Gastrocnemius medialis (tissue), 4 donors: ENCODE measurements at regions of chr17 and their contacts with region 1.

Region 1: GRCh38 chr17:17476865-17477467 is at the start of gene MED9:
- DNase-seq: peak; percentile 83 to 91
- ATAC-seq: peak; percentile 96 to 99
- H3K4me3 ChIP-seq: peak within 1 kb of the TSS; percentile 68 to 98 (median 97)
- H3K27ac ChIP-seq: peak within 1 kb of the TSS; percentile 89 to 99 (median 98)
- H3K4me1 ChIP-seq: peaks cover 40 to 46% of the 10 kb centered on the region in 2 donors
- H3K27me3 ChIP-seq: no peaks in the 10 kb centered on the region
- CTCF ChIP-seq: peak in 2 of 5 experiments; percentile 17 to 20
- POLR2A ChIP-seq: peak; percentile 55 to 78
- total RNA-seq, gene MED9: 20.4 to 33.7 (median 27.7) TPM

Region 2: GRCh38 chr17:17280613-17281549 is 196.1 kb before region 1 on chr17 and contains the start of gene COPS3:
- in situ Hi-C with region 1: no loop called
- intact Hi-C with region 1: loop called (anchors 5 kb)
- DNase-seq: peak; percentile 98 to 99
- ATAC-seq: peak; percentile 95
- H3K4me3 ChIP-seq: peak within 1 kb of the TSS; percentile 88 to 99 (median 92)
- H3K27ac ChIP-seq: peak within 1 kb of the TSS; percentile 97 to 100 (median 100)
- H3K4me1 ChIP-seq: peaks cover 39 to 41% of the 10 kb centered on the region in 2 donors
- H3K27me3 ChIP-seq: no peaks in the 10 kb centered on the region
- CTCF ChIP-seq: no peak
- POLR2A ChIP-seq: peak; percentile 90 to 91
- total RNA-seq, gene COPS3: 145 to 249 (median 175) TPM

Region 3: GRCh38 chr17:17356149-17356930 is 120.6 kb before region 1 on chr17:
- in situ Hi-C with region 1: loop called in 1 of 4 experiments (anchors 10 kb)
- intact Hi-C with region 1: loop called (anchors 5 kb)
- DNase-seq: peak; percentile 55 to 77
- ATAC-seq: peak; percentile 79 to 83
- H3K4me3 ChIP-seq: no peak overlapping the region
- H3K27ac ChIP-seq: no peak overlapping the region
- H3K4me1 ChIP-seq: peaks cover 0 to 5% of the 10 kb centered on the region in 2 donors
- H3K27me3 ChIP-seq: no peaks in the 10 kb centered on the region
- CTCF ChIP-seq: peak; percentile 98 to 100 (median 99)
- POLR2A ChIP-seq: no peak

Region 4: GRCh38 chr17:17580662-17581470 is 103.9 kb after region 1 on chr17:
- in situ Hi-C with region 1: loop called in 1 of 4 experiments (anchors 10 kb)
- intact Hi-C with region 1: no loop called
- DNase-seq: no peak
- ATAC-seq: no peak
- H3K4me3 ChIP-seq: no peak overlapping the region
- H3K27ac ChIP-seq: no peak overlapping the region
- H3K4me1 ChIP-seq: peaks cover 0 to 3% of the 10 kb centered on the region in 2 donors
- H3K27me3 ChIP-seq: no peaks in the 10 kb centered on the region
- CTCF ChIP-seq: no peak
- POLR2A ChIP-seq: no peak